B cell (primary cell): ENCODE measurements at regions of chr15 and their contacts with region 1.

Region 1: GRCh38 chr15:44426975-44427755 is at the start of gene CTDSPL2:
- DNase-seq: peak; percentile 94
- ATAC-seq: peak; percentile 97
- H3K4me3 ChIP-seq: peak within 1 kb of the TSS; percentile 93 to 100 (median 98)
- H3K4me3 Mint-ChIP-seq: peak within 1 kb of the TSS; percentile 96
- H3K27ac ChIP-seq: peak within 1 kb of the TSS; percentile 95 to 98
- H3K27ac Mint-ChIP-seq: peak within 1 kb of the TSS; percentile 98
- H3K4me1 ChIP-seq: peaks cover 18 to 23% of the 10 kb centered on the region in 2 donors
- H3K4me1 Mint-ChIP-seq: peaks cover 46% of the 10 kb centered on the region
- H3K27me3 ChIP-seq: no peaks in the 10 kb centered on the region
- H3K27me3 Mint-ChIP-seq: no peaks in the 10 kb centered on the region
- CTCF ChIP-seq: peak; percentile 34
- total RNA-seq, gene CTDSPL2: 79.5 and 84.1 TPM in 2 replicates

Region 2: DNA sequence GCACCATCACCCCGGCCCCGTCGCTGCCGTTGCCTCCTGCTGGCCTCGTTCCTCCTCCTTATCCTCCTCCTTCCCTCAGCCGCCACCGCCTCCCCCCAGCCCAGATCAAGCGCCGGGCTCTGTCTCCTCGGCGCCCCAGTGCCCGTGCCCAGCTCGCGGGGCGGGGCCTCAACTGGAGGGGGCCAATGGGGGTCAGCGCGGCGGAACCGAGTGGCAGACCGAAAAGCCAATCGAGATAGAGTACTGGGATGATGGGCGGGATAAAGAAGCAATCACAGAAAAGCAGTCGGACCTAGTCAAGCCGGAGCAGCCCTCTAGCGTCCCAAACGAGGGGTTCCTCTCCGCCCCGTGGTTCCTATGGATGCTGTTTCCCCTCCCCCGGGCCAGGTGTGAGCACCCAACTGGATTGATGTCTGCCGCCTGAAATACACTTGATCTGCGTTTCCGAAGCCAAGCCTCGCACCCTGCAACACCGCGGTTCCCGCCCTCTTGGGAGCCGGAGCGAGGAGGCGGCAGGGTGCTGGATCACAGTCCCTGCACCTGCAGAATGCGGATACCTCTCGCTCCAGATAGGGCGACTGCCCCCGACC is 231.9 kb before region 1 on chr15 and contains the start of gene FRMD5:
- CTCF ChIA-PET with region 1: no interaction called
- POLR2A ChIA-PET with region 1: no interaction called
- intact Hi-C with region 1: loop called (anchors 1 kb)
- DNase-seq: peak; percentile 92
- ATAC-seq: peak; percentile 97
- H3K4me3 ChIP-seq: peak within 1 kb of the TSS; percentile 38 to 73 (median 54)
- H3K4me3 Mint-ChIP-seq: peak within 1 kb of the TSS; percentile 90
- H3K27ac ChIP-seq: no peak within 1 kb of the TSS
- H3K27ac Mint-ChIP-seq: peak within 1 kb of the TSS; percentile 76
- H3K4me1 ChIP-seq: peaks cover 18 to 23% of the 10 kb centered on the region in 2 donors
- H3K4me1 Mint-ChIP-seq: peaks cover 21% of the 10 kb centered on the region
- H3K27me3 ChIP-seq: peaks cover 0 to 50% (median 40%) of the 10 kb centered on the region in 4 experiments
- H3K27me3 Mint-ChIP-seq: peaks cover 69% of the 10 kb centered on the region
- CTCF ChIP-seq: no peak
- total RNA-seq, gene FRMD5: not detected in 2 replicates

Region 3: DNA sequence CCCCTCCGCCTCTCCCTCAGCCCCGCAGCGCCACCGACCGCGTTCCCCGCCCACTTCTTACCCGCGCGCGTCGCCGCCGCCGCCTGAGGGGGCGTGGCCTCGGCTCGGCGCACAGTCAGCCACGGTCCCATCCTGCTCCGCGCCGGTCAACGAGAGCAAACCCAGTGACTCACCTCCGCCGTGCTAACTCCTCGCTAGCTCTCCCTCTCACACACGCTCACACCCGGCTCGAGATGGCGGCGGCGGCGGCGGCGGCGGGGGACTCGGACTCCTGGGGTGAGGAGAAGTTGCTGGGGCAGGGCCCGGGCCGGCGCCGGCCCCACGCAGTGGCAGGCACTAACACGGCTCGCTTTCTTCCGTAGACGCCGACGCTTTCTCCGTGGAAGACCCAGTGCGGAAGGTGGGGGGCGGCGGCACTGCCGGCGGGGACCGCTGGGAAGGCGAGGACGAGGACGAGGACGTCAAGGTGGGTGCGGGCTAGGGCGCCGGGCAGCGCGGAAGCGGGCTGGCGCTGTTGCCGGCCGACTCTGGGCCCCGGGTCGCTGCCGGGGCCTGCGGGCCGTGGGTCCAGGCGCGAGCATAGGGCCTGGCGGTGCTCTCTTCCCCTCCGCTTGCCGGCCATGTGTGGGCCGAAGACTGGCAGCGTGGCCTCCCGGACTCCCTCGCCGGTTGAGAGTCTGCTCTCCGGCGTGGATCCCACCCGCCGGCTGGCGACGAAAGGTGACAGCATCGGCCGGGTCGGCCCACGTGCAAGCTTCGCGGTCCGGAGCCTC is 110.0 kb after region 1 on chr15 and contains the start of gene EIF3J:
- CTCF ChIA-PET with region 1: no interaction called
- POLR2A ChIA-PET with region 1: no interaction called
- intact Hi-C with region 1: loop called (anchors 1 kb)
- DNase-seq: peak; percentile 97
- ATAC-seq: peak; percentile 89
- H3K4me3 ChIP-seq: peak within 1 kb of the TSS; percentile 82 to 99 (median 92)
- H3K4me3 Mint-ChIP-seq: peak within 1 kb of the TSS; percentile 93
- H3K27ac ChIP-seq: peak within 1 kb of the TSS; percentile 83 to 94
- H3K27ac Mint-ChIP-seq: peak within 1 kb of the TSS; percentile 98
- H3K4me1 ChIP-seq: peaks cover 15 to 21% of the 10 kb centered on the region in 2 donors
- H3K4me1 Mint-ChIP-seq: peaks cover 40% of the 10 kb centered on the region
- H3K27me3 ChIP-seq: no peaks in the 10 kb centered on the region
- H3K27me3 Mint-ChIP-seq: no peaks in the 10 kb centered on the region
- CTCF ChIP-seq: no peak
- total RNA-seq, gene EIF3J: 61.0 and 66.7 TPM in 2 replicates